HEK293 (cell line): ENCODE measurements at regions of chr14 and their contacts with region 1.

Region 1: DNA sequence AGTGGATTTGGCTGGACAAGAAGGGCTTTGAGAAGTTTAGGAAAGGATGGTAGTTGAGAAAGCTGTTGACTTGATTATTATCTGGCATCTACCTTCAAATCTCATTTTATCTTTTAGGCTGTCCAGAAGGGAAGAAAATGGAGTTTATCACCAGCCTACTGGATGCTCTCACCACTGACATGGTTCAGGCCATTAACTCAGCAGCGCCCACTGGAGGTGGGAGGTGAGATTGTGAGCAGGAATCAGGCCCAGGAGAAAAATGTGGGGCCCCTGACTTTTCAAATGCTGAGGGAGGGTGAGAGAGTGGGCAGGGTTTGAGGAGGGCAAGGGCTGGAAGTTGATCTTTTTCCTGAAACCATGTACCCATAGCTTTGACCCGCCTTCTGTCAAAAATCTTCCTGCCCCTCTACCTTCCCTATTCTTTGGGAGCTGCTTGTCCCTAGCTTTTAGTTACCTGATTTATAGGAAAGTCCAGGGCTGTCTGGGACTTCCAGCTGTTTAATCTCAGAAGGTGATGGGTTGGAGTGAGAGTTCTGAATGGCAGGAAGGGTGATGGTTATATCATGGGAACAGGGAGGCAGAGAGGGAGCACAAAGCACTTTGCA is 134.2 kb downstream of the SMOC1 start:
- H3K4me3 ChIP-seq: no peak overlapping the region
- H3K27ac ChIP-seq: no peak overlapping the region
- H3K4me1 ChIP-seq: peaks cover 8% of the 10 kb centered on the region
- CTCF ChIP-seq: no peak

Region 2: GRCh38 chr14:68911594-68912227 is 1101.7 kb before region 1 on chr14:
- CTCF ChIA-PET with region 1: no interaction called
- POLR2A ChIA-PET with region 1: no interaction called
- H3K4me3 ChIP-seq: no peak overlapping the region
- H3K27ac ChIP-seq: no peak overlapping the region
- H3K4me1 ChIP-seq: no peaks in the 10 kb centered on the region
- CTCF ChIP-seq: peak; percentile 81

Region 3: GRCh38 chr14:69460093-69460701 is 553.2 kb before region 1 on chr14:
- CTCF ChIA-PET with region 1: no interaction called
- POLR2A ChIA-PET with region 1: no interaction called
- H3K4me3 ChIP-seq: no peak overlapping the region
- H3K27ac ChIP-seq: no peak overlapping the region
- H3K4me1 ChIP-seq: no peaks in the 10 kb centered on the region
- CTCF ChIP-seq: peak; percentile 34; the same call in 1 of the 2 replicates

Region 4: DNA sequence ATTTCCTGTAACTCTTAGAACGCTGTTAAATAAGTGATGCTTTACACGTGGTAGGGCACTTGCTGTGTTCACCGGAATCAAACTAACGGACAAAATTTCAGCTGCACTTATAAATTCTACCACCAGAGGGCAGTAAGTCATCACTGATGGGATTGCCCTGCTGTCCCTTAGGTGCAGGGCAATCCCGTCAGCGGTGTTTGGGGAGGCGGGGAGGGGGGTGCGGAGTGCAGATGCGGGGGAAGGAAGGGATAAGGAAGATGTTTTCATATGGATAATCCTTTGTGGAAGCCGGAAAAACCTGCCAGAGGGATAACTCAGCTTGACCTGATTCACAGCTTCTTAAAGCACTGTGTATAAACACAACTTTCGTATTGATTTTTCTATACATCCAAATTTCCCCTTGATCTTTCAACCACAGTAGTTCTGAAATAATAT is 194.6 kb before region 1 on chr14:
- CTCF ChIA-PET with region 1: interaction called, 10 read pairs
- POLR2A ChIA-PET with region 1: no interaction called
- H3K4me3 ChIP-seq: no peak overlapping the region
- H3K27ac ChIP-seq: no peak overlapping the region
- H3K4me1 ChIP-seq: no peaks in the 10 kb centered on the region
- CTCF ChIP-seq: peak; percentile 55; the same call in 1 of the 2 replicates

Region 5: GRCh38 chr14:69879175-69880043 is 134.0 kb before region 1 on chr14 and contains the start of gene SMOC1:
- CTCF ChIA-PET with region 1: interaction called, 37 read pairs
- POLR2A ChIA-PET with region 1: interaction called, 7 read pairs
- H3K4me3 ChIP-seq: peak within 1 kb of the TSS; percentile 64
- H3K27ac ChIP-seq: peak within 1 kb of the TSS; percentile 100
- H3K4me1 ChIP-seq: peaks cover 28% of the 10 kb centered on the region
- CTCF ChIP-seq: peak; percentile 39

Region 6: GRCh38 chr14:69982220-69982839 is 31.0 kb before region 1 on chr14:
- CTCF ChIA-PET with region 1: interaction called, 15 read pairs
- POLR2A ChIA-PET with region 1: no interaction called
- H3K4me3 ChIP-seq: no peak overlapping the region
- H3K27ac ChIP-seq: no peak overlapping the region
- H3K4me1 ChIP-seq: no peaks in the 10 kb centered on the region
- CTCF ChIP-seq: no peak

Region 7: GRCh38 chr14:69997849-69998248 is 15.5 kb before region 1 on chr14:
- CTCF ChIA-PET with region 1: interaction called, 20 read pairs
- POLR2A ChIA-PET with region 1: no interaction called
- H3K4me3 ChIP-seq: no peak overlapping the region
- H3K27ac ChIP-seq: peak overlapping the region; percentile 80
- H3K4me1 ChIP-seq: peaks cover 40% of the 10 kb centered on the region
- CTCF ChIP-seq: no peak

Region 8: DNA sequence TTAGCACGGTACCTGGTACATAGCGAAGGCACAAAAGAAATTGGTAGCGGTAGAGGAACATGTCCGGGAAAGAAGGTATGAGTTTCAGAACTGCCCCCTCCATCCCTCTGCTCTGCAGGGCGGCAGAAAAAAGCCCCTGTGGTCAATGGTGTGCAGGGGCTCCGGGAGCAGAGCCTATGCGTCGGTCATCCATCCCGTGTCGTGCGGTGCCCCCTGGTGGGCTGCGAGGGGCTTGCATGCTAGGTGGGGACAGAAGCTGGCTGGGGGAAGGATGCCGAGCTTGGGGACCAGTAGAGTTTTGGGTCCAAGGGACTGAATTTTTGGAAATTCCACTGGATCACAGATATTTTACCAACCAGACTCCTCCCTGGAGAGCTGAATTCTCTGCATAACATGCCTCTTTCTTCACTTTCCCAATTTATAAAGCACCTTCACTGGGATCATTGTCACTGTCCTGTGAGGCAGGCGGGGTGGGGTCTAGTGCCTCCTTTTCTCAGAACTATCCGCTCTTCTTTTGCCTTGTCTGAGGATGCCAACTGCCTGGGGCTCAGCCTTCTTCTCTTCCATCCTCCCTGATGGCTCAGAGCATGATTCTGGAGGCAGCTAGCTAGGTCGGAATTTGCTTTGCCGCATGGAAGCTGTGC is 14.5 kb after region 1 on chr14:
- CTCF ChIA-PET with region 1: interaction called, 22 read pairs
- POLR2A ChIA-PET with region 1: no interaction called
- H3K4me3 ChIP-seq: no peak overlapping the region
- H3K27ac ChIP-seq: no peak overlapping the region
- H3K4me1 ChIP-seq: no peaks in the 10 kb centered on the region
- CTCF ChIP-seq: peak; percentile 75; the same call in 1 of the 2 replicates

Region 9: GRCh38 chr14:70061108-70061507 is 47.7 kb after region 1 on chr14:
- CTCF ChIA-PET with region 1: no interaction called
- POLR2A ChIA-PET with region 1: no interaction called
- H3K4me3 ChIP-seq: no peak overlapping the region
- H3K27ac ChIP-seq: no peak overlapping the region
- H3K4me1 ChIP-seq: no peaks in the 10 kb centered on the region
- CTCF ChIP-seq: no peak